Activated CD8-positive, alpha-beta T cell treated with anti-CD3 and anti-CD28 coated beads for 36 hours (primary cell): ENCODE measurements at regions of chr15 and their contacts with region 1.

Region 1: GRCh38 chr15:43285609-43286037 is 18.9 kb upstream of the TGM5 start:
- DNase-seq: peak; percentile 77
- ATAC-seq: peak; percentile 80
- H3K4me3 Mint-ChIP-seq: no peak overlapping the region
- H3K27ac Mint-ChIP-seq: no peak overlapping the region
- H3K4me1 Mint-ChIP-seq: no peaks in the 10 kb centered on the region
- H3K27me3 Mint-ChIP-seq: no peaks in the 10 kb centered on the region
- CTCF ChIP-seq: peak; percentile 83

Region 2: GRCh38 chr15:42018306-42019224 is 1267.1 kb before region 1 on chr15:
- CTCF ChIA-PET with region 1: no interaction called
- POLR2A ChIA-PET with region 1: no interaction called
- intact Hi-C with region 1: no loop called
- DNase-seq: no peak
- ATAC-seq: no peak
- H3K4me3 Mint-ChIP-seq: no peak overlapping the region
- H3K27ac Mint-ChIP-seq: no peak overlapping the region
- H3K4me1 Mint-ChIP-seq: no peaks in the 10 kb centered on the region
- H3K27me3 Mint-ChIP-seq: no peaks in the 10 kb centered on the region
- CTCF ChIP-seq: no peak

Region 3: DNA sequence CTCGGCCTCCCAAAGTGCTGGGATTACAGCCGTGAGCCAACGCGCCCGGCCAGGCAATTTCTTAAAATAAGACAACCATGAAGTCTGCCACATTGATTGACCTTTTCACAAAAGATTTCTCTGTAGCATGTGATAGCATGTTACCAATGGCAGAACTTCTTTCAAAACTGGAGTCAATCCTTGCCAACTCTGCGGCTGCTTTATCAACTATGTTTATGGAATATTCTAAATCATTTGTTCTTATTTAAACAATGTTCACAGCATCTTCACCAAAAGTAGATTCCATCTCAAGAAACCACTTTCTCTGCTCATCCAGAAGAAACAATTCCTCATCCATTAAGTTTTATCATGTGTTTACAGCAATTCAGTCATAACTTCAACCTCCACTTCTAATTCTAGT is 189.2 kb before region 1 on chr15:
- CTCF ChIA-PET with region 1: no interaction called
- POLR2A ChIA-PET with region 1: no interaction called
- intact Hi-C with region 1: no loop called
- DNase-seq: no peak
- ATAC-seq: no peak
- H3K4me3 Mint-ChIP-seq: no peak overlapping the region
- H3K27ac Mint-ChIP-seq: no peak overlapping the region
- H3K4me1 Mint-ChIP-seq: peaks cover 62% of the 10 kb centered on the region
- H3K27me3 Mint-ChIP-seq: no peaks in the 10 kb centered on the region
- CTCF ChIP-seq: no peak

Region 4: DNA sequence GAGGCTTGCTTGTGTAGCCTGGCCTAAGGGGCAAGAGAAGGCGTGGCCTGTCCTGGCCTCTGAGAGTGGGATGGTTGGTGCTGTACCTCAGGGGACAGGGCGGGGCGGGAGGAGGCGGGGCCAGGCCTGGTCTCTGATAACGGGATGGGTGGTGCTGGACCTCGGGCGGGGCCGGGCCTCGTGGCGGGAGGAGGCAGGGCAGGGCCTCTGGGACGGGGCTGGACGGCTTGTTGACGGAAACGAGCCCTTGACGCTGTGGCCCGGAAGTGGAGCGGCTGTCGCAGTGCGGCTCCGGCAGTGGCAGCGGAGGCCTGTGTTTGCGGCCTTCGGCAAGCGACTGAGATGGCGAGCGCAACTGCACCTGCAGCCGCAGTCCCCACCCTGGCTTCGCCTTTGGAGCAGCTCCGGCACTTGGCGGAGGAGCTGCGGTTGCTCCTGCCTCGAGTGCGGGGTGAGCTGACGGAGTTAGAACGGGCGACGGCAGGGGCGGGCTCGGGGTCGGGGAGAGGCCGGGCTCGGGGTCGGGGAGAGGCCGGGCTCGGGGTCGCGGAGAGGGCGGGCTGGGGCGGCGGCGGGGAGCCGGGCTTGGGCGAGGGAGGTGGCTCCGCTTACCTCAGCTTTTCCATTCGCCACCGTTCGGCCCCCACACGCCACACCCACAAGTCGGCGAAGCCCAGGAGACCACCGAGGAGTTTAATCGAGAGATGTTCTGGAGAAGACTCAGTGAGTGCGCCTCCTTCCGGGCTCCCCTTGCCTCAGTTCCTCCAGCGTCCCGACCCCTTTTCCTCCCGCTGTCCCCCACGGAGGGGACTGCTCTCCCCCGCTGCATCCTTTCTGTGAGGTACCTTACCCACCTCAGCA is 100.2 kb before region 1 on chr15 and contains the start of gene CCNDBP1:
- CTCF ChIA-PET with region 1: interaction called, 10 read pairs
- POLR2A ChIA-PET with region 1: no interaction called
- intact Hi-C with region 1: no loop called
- DNase-seq: peak; percentile 96
- ATAC-seq: peak; percentile 95
- H3K4me3 Mint-ChIP-seq: peak within 1 kb of the TSS; percentile 88
- H3K27ac Mint-ChIP-seq: peak within 1 kb of the TSS; percentile 93
- H3K4me1 Mint-ChIP-seq: peaks cover 28% of the 10 kb centered on the region
- H3K27me3 Mint-ChIP-seq: no peaks in the 10 kb centered on the region
- CTCF ChIP-seq: peak; percentile 64
- total RNA-seq, gene CCNDBP1: 49.2 to 54.1 TPM

Region 5: GRCh38 chr15:43204016-43204901 is 81.4 kb before region 1 on chr15:
- CTCF ChIA-PET with region 1: interaction called, 25 read pairs
- POLR2A ChIA-PET with region 1: no interaction called
- intact Hi-C with region 1: no loop called
- DNase-seq: peak; percentile 83
- ATAC-seq: peak; percentile 86
- H3K4me3 Mint-ChIP-seq: no peak overlapping the region
- H3K27ac Mint-ChIP-seq: no peak overlapping the region
- H3K4me1 Mint-ChIP-seq: peaks cover 8% of the 10 kb centered on the region
- H3K27me3 Mint-ChIP-seq: peaks cover 6% of the 10 kb centered on the region
- CTCF ChIP-seq: peak; percentile 65

Region 6: GRCh38 chr15:43225201-43225949 is 60.2 kb before region 1 on chr15:
- CTCF ChIA-PET with region 1: interaction called, 219 read pairs
- POLR2A ChIA-PET with region 1: no interaction called
- intact Hi-C with region 1: loop called (anchors 1 kb)
- DNase-seq: peak; percentile 67
- ATAC-seq: peak; percentile 96
- H3K4me3 Mint-ChIP-seq: no peak overlapping the region
- H3K27ac Mint-ChIP-seq: no peak overlapping the region
- H3K4me1 Mint-ChIP-seq: peaks cover 7% of the 10 kb centered on the region
- H3K27me3 Mint-ChIP-seq: peaks cover 5% of the 10 kb centered on the region
- CTCF ChIP-seq: peak; percentile 82

Region 7: DNA sequence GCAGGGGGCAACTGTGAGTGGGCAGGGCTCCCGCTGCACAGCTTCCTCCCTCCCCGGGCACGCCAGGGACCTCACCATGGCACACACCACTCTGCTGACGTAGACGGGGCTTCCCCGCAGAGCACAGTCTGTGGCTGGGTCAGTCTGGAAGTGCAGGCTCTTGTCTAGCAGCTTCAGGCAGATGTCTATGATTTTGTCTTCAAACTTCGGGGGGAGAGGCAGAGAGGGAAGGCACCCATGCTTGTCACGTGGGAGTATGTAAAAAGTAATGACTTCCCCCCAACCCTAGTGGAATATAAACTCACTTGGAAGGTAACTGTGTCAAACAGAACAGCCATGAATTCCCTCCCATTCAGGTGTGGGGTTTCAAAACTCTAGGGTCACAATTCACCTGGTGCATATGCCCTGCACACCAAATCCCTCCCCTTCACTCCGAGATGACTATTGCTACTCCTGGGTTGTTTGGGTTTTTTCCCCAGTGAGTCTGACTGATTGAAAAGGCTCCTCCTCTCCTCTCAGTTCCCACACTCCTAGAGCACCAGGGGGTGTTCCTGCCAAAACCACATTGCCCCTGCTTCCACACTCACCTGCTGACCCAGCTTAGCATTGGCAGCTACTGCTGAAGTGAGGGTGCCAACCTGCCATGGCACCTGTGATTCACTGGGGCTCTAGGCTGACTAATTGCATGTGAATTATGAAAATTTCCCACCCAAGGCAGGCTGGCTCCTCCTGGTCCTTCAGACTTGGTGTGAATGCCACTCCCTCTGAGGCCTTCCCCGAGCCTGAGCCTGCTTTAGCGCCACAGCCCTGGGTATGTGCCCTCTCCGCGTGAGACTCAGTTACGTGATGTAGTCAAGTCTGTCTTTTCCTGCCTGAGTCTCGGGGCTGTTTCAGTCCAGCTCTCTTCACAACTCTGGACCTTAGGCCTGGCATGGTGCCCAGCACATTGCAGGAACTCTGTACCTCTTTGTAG is 31.9 kb before region 1 on chr15:
- CTCF ChIA-PET with region 1: interaction called, 10 read pairs
- POLR2A ChIA-PET with region 1: interaction called, 3 read pairs
- intact Hi-C with region 1: no loop called
- DNase-seq: peak; percentile 71
- ATAC-seq: peak; percentile 55
- H3K4me3 Mint-ChIP-seq: no peak overlapping the region
- H3K27ac Mint-ChIP-seq: peak overlapping the region; percentile 70
- H3K4me1 Mint-ChIP-seq: peaks cover 48% of the 10 kb centered on the region
- H3K27me3 Mint-ChIP-seq: no peaks in the 10 kb centered on the region
- CTCF ChIP-seq: no peak

Region 8: DNA sequence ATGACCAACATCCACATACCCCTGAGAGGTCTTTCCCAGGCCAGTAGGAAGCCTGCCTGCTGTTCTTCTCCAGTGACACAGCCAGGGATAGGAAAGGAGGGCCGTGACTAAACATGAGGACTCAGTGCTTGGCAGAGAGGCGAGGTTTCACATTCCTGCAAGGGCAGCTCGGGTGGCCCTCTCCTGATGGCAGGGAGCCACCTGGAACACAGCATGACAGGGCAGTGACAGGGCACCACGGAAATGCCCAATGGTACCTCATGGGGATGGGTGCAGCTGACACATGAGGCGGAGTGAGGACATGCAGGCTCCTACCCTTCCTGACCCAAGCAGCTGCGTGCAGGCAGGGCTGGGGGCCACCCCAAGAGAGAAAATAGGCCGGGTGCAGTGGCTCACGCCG is 11.5 kb before region 1 on chr15:
- CTCF ChIA-PET with region 1: interaction called, 18 read pairs
- POLR2A ChIA-PET with region 1: no interaction called
- intact Hi-C with region 1: no loop called
- DNase-seq: no peak
- ATAC-seq: no peak
- H3K4me3 Mint-ChIP-seq: no peak overlapping the region
- H3K27ac Mint-ChIP-seq: no peak overlapping the region
- H3K4me1 Mint-ChIP-seq: no peaks in the 10 kb centered on the region
- H3K27me3 Mint-ChIP-seq: peaks cover 6% of the 10 kb centered on the region
- CTCF ChIP-seq: no peak

Region 9: GRCh38 chr15:43312378-43312777 is 26.8 kb after region 1 on chr15:
- CTCF ChIA-PET with region 1: interaction called, 16 read pairs
- POLR2A ChIA-PET with region 1: no interaction called
- intact Hi-C with region 1: no loop called
- DNase-seq: no peak
- ATAC-seq: no peak
- H3K4me3 Mint-ChIP-seq: no peak overlapping the region
- H3K27ac Mint-ChIP-seq: no peak overlapping the region
- H3K4me1 Mint-ChIP-seq: no peaks in the 10 kb centered on the region
- H3K27me3 Mint-ChIP-seq: peaks cover 35% of the 10 kb centered on the region
- CTCF ChIP-seq: no peak

Region 10: DNA sequence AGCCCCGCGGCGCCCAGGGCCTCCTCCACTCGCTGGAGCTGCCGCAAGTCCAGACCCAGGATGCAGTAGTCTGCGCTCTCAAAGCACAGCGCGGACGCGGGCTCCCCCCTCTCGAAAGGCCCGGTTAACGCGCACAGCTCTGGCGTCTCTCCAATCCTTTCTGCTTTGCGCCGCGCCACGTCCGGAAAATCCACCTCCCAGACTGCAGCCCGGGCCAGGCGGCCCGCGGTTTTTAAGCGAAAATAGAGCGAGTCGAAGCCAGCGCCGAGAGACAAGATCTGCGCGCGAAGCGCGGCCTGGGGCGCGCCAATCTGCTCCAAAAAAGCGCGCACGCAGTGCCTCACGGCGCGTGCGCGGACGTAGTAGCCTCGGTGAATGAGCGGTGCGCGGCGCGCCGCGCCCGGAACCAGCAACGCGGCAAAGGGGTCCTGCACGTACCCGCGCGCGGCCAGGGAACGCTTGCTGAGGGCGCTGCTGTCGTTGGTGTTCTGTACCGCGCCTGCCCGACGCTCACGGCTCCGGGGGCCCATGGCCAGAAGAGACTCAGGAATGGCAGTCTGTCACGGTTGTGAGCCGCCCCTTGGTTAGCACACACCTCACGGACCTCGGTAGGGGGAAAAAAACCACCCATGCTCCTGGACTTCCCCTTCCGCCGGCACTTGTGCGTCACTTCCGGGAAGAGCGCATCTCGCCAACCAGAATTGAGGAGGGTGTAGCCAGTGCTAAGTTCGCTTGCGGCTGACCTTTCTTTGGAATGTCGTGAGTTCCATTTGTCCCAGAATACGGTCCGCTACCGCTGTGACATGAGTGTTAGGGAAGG is 44.5 kb after region 1 on chr15 and contains the start of gene LCMT2:
- CTCF ChIA-PET with region 1: no interaction called
- POLR2A ChIA-PET with region 1: no interaction called
- intact Hi-C with region 1: no loop called
- DNase-seq: peak; percentile 93
- ATAC-seq: peak; percentile 89
- H3K4me3 Mint-ChIP-seq: peak within 1 kb of the TSS; percentile 96
- H3K27ac Mint-ChIP-seq: peak within 1 kb of the TSS; percentile 99
- H3K4me1 Mint-ChIP-seq: peaks cover 35% of the 10 kb centered on the region
- H3K27me3 Mint-ChIP-seq: no peaks in the 10 kb centered on the region
- CTCF ChIP-seq: no peak
- total RNA-seq, gene LCMT2: 8.3 to 9.2 TPM

Region 11: GRCh38 chr15:43370310-43370974 is 84.8 kb after region 1 on chr15:
- CTCF ChIA-PET with region 1: no interaction called
- POLR2A ChIA-PET with region 1: no interaction called
- intact Hi-C with region 1: no loop called
- DNase-seq: peak; percentile 13
- ATAC-seq: no peak
- H3K4me3 Mint-ChIP-seq: peak overlapping the region; percentile 90
- H3K27ac Mint-ChIP-seq: peak overlapping the region; percentile 89
- H3K4me1 Mint-ChIP-seq: peaks cover 47% of the 10 kb centered on the region
- H3K27me3 Mint-ChIP-seq: no peaks in the 10 kb centered on the region
- CTCF ChIP-seq: no peak